GM13977 (cell line): ENCODE measurements at regions of chr7 and their contacts with region 1.

Region 1: GRCh38 chr7:97835296-97836138 is 36.7 kb downstream of the ASNS start:
- DNase-seq: peak; percentile 53
- CTCF ChIP-seq: peak; percentile 70

Region 2: GRCh38 chr7:96426027-96426426 is 1409.5 kb before region 1 on chr7:
- in situ Hi-C with region 1: no loop called
- DNase-seq: no peak
- CTCF ChIP-seq: no peak

Region 3: DNA sequence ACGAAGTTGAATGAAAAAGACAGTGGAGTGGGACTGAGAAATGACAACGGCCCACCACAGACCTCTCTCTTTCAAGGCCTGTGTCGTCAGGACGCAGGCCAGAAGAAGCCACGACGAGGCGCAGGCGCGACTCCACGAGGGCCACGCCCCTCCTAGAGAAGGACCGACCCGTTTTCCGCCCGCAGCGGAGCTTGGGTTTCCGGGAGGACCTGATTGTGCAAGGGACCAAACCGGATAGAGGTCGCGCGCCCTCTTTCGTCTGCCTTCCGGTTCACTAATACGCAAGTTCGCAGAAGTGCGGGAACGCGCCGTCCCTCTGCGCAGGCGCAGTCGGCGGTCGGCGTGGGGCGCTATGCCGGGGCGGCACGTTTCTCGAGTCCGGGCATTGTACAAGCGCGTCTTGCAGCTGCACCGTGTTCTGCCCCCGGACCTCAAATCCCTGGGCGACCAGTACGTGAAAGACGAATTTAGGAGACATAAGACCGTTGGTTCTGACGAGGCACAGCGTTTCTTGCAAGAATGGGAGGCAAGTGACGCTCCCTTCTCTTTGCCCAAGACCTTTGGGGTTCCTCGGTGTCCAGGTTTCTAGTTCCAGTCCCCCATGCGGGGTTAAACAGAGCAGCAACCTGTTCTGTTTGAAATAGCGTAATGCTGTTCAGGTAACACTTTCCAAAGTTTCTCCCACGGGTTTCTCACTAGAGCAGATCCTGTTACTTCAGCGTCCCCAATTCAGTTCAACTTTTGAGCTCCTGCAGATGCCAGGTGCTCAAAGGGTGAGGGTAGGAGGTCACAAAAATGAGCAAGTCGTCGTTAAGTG is 717.9 kb before region 1 on chr7 and contains the start of gene SDHAF3:
- in situ Hi-C with region 1: loop called (anchors 25 kb)
- DNase-seq: peak; percentile 91
- CTCF ChIP-seq: no peak

Region 4: GRCh38 chr7:97226541-97226940 is 609.0 kb before region 1 on chr7:
- in situ Hi-C with region 1: no loop called
- DNase-seq: no peak
- CTCF ChIP-seq: no peak

Region 5: GRCh38 chr7:97513326-97513725 is 322.2 kb before region 1 on chr7:
- in situ Hi-C with region 1: loop called (anchors 25 kb)
- DNase-seq: no peak
- CTCF ChIP-seq: no peak